Ovary (tissue), 10 donors: ENCODE measurements at regions of chr3 and their contacts with region 1.

Region 1: GRCh38 chr3:42600111-42600988 is at the start of gene NKTR:
- DNase-seq: peak; percentile 98 to 99 (median 99)
- H3K4me3 ChIP-seq: peak within 1 kb of the TSS; percentile 78
- H3K27ac ChIP-seq: peak within 1 kb of the TSS; percentile 92 to 95
- H3K4me1 ChIP-seq: peaks cover 5% of the 10 kb centered on the region
- H3K27me3 ChIP-seq: no peaks in the 10 kb centered on the region
- CTCF ChIP-seq: no peak
- EP300 ChIP-seq: no peak
- POLR2A ChIP-seq: peak; percentile 74
- total RNA-seq, gene NKTR: 68.6 to 114 (median 89.7) TPM

Region 2: GRCh38 chr3:42581709-42582473 is 18.5 kb before region 1 on chr3 and contains the start of gene SEC22C:
- intact Hi-C with region 1: loop called in 1 of 4 experiments (anchors 2 kb)
- DNase-seq: peak; percentile 94 to 96 (median 95)
- H3K4me3 ChIP-seq: peak within 1 kb of the TSS; percentile 98
- H3K27ac ChIP-seq: peak within 1 kb of the TSS; percentile 82 to 83
- H3K4me1 ChIP-seq: peaks cover 3% of the 10 kb centered on the region
- H3K27me3 ChIP-seq: no peaks in the 10 kb centered on the region
- CTCF ChIP-seq: no peak
- EP300 ChIP-seq: no peak
- POLR2A ChIP-seq: peak; percentile 85
- total RNA-seq, gene SEC22C: 33.7 to 68.5 (median 46.0) TPM

Region 3: DNA sequence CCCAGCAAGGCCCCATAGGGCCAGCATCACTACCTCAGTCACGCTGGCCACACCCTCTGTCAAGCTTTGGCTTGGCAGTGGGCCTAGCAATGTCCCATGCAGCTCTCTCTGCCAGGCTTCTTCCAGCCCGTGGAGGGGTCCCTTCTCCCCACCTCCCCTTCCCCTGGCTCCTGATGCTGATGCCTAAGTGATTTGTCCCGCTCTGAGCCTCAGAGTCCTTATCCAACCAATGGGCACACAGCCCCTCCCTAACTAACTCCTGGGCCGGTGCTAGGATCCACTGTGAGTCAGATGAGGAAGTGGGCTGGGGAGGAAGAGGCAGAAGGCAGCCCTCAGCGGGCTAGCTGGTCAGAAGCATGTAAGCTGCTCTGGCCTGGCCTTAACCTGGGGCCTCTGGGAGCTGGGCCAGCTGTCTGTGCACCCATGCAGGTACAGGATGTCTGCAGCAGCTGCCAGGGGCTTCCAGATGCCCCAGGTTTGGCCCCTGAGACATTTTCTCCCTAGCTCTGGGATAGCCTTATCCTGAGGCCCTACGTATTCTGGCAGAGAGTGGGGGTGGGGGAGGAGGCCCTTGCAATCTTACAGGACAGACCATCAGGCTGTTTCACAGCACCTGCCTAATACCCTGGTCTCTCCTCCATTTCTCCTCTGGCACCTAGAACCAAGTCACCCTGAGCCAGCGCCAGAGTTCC is 52.4 kb after region 1 on chr3:
- intact Hi-C with region 1: loop called in 1 of 4 experiments (anchors 5 kb)
- DNase-seq: peak; percentile 59 to 70 (median 65)
- H3K4me3 ChIP-seq: peak overlapping the region; percentile 88
- H3K27ac ChIP-seq: peak overlapping the region; percentile 95 to 98
- H3K4me1 ChIP-seq: peaks cover 16% of the 10 kb centered on the region
- H3K27me3 ChIP-seq: no peaks in the 10 kb centered on the region
- CTCF ChIP-seq: no peak
- EP300 ChIP-seq: no peak
- POLR2A ChIP-seq: peak; percentile 36

Region 4: GRCh38 chr3:42728056-42728455 is 127.7 kb after region 1 on chr3:
- intact Hi-C with region 1: no loop called
- DNase-seq: peak in 3 of 5 donors; percentile 31 to 55 (median 45)
- H3K4me3 ChIP-seq: no peak overlapping the region
- H3K27ac ChIP-seq: no peak overlapping the region
- H3K4me1 ChIP-seq: peaks cover 4% of the 10 kb centered on the region
- H3K27me3 ChIP-seq: no peaks in the 10 kb centered on the region
- CTCF ChIP-seq: no peak
- EP300 ChIP-seq: no peak
- POLR2A ChIP-seq: no peak